ENCODE measurements at regions of chr18 and their contacts with region 1.

Region 1: DNA sequence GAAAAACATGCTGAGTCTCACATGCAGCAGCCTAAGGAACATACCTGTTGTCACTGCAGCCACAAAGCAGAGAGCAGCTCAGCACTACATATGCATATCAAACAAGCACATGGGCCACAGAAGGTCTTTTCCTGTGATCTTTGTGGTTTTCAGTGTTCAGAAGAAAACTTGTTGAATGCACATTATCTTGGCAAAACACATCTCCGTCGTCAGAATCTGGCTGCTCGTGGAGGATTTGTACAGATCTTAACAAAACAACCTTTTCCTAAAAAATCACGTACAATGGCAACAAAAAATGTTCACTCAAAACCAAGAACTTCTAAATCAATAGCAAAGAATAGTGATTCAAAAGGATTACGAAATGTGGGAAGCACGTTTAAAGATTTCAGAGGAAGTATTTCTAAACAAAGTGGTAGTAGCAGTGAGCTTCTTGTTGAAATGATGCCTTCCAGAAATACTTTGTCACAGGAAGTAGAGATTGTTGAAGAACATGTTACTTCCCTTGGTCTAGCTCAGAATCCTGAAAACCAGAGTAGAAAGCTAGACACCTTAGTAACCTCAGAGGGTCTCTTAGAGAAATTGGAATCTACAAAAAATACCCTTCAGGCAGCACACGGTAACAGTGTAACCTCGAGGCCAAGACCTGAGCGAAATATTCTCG is 34.1 kb downstream of the ZNF407 start:
- DNase-seq: peak in 7 of 9 donors; percentile 35 to 81 (median 67)
- ATAC-seq: peak; percentile 91
- H3K4me3 ChIP-seq: peak overlapping the region; percentile 6
- H3K4me3 Mint-ChIP-seq: peak overlapping the region; percentile 68 to 91 (median 86)
- H3K27ac ChIP-seq: peak overlapping the region; percentile 59
- H3K27ac Mint-ChIP-seq: peak overlapping the region; percentile 90 to 98 (median 95)
- H3K4me1 ChIP-seq: peaks cover 24 to 44% of the 10 kb centered on the region in 2 donors
- H3K4me1 Mint-ChIP-seq: peaks cover 46 to 79% (median 67%) of the 10 kb centered on the region in 7 donors
- H3K27me3 ChIP-seq: no peaks in the 10 kb centered on the region
- H3K27me3 Mint-ChIP-seq: no peaks in the 10 kb centered on the region

Region 2: DNA sequence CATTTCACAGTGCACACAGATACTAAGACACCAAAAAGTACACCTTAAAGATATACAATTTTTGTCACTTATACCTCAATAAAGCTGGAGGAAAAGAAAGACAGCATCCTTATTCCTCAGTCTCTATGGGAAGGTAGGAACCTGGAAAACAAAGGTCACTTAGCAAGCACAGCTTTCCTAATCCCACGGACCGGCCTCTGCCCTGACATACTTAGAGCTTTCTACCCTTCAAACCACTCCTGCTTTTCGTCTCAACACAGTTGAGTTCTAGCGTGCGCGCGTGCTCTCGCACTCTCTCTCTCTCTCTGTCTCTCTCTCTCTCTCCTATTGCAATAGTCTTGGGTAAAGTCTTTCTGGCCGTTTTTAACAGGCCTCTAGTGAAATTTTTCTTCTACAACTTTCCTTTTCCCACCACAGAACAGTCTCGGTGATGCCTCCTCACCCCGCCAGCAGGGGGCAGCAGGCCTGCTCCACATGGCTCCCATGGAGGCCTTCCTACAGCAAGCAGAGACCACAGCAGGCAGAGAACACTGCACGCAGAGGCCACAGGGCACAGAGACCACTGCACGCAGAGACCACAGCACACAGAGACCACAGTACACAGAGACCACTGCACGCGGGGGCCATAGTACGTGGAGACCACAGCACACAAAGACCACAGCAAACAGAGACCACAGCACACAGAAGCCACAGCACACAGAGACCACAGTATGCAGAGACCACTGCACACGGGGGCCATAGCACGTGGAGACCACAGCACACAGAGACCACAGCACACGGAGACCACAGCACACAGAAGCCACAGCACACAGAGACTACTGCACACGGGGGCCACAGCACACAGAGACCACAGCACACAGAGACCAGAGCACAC is 591.1 kb before region 1 on chr18:
- CTCF ChIA-PET with region 1: no interaction called
- POLR2A ChIA-PET with region 1: no interaction called
- intact Hi-C with region 1: no loop called
- DNase-seq: peak; percentile 32 to 81 (median 62)
- ATAC-seq: peak; percentile 68
- H3K4me3 ChIP-seq: no peak overlapping the region
- H3K4me3 Mint-ChIP-seq: no peak overlapping the region
- H3K27ac ChIP-seq: no peak overlapping the region
- H3K27ac Mint-ChIP-seq: no peak overlapping the region
- H3K4me1 ChIP-seq: no peaks in the 10 kb centered on the region
- H3K4me1 Mint-ChIP-seq: peaks cover 0 to 5% (median 0%) of the 10 kb centered on the region in 7 donors
- H3K27me3 ChIP-seq: no peaks in the 10 kb centered on the region
- H3K27me3 Mint-ChIP-seq: no peaks in the 10 kb centered on the region

Region 3: GRCh38 chr18:74183130-74183529 is 448.6 kb before region 1 on chr18:
- CTCF ChIA-PET with region 1: no interaction called
- POLR2A ChIA-PET with region 1: no interaction called
- intact Hi-C with region 1: no loop called
- DNase-seq: no peak
- ATAC-seq: no peak
- H3K4me3 ChIP-seq: no peak overlapping the region
- H3K4me3 Mint-ChIP-seq: no peak overlapping the region
- H3K27ac ChIP-seq: no peak overlapping the region
- H3K27ac Mint-ChIP-seq: no peak overlapping the region
- H3K4me1 ChIP-seq: no peaks in the 10 kb centered on the region
- H3K4me1 Mint-ChIP-seq: no peaks in the 10 kb centered on the region
- H3K27me3 ChIP-seq: no peaks in the 10 kb centered on the region
- H3K27me3 Mint-ChIP-seq: peaks cover 9 to 23% (median 13%) of the 10 kb centered on the region in 5 donors

Region 4: DNA sequence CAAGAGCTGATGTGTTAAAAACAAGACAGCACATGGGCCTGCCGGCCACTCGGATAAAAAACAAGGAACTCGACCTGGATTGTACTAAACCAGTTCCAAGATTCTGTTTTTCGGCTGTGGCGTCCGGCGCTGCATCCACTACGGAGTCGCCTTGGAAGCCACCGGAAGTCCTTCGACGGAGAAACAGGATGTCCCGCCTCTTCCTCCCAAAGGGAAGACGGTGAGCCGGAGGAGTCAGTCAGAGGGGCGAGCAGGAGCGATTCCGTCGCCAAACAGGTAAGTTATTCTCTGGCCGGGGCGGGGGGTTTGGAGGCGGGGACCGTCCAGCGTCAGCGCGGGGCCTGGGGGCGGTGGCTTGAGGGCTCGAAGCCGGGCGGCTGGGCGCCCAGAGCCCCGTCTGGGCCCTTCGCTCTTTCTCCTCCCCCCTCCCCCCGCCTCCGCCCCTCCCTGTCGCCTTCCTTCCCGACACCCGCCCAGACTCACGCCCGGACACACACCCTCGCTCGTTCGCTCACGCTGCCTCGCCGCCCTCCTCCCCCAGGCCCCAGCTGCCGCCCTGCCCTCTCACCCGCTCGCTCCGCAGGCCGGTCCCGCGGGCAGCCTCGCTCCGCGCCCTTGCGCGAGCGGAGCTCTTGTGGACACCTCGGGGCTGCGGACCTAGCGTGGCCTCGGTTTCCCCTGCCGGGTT is 33.9 kb before region 1 on chr18 and contains the start of gene ZNF407:
- CTCF ChIA-PET with region 1: no interaction called
- POLR2A ChIA-PET with region 1: interaction called, 70 read pairs
- intact Hi-C with region 1: loop called (anchors 1 kb)
- DNase-seq: peak; percentile 77 to 94 (median 90)
- ATAC-seq: peak; percentile 84
- H3K4me3 ChIP-seq: peak within 1 kb of the TSS; percentile 100
- H3K4me3 Mint-ChIP-seq: peak within 1 kb of the TSS; percentile 89 to 96 (median 95)
- H3K27ac ChIP-seq: peak within 1 kb of the TSS; percentile 88
- H3K27ac Mint-ChIP-seq: peak within 1 kb of the TSS; percentile 95 to 99 (median 98)
- H3K4me1 ChIP-seq: peaks cover 26 to 27% of the 10 kb centered on the region in 2 donors
- H3K4me1 Mint-ChIP-seq: peaks cover 33 to 74% (median 61%) of the 10 kb centered on the region in 7 donors
- H3K27me3 ChIP-seq: no peaks in the 10 kb centered on the region
- H3K27me3 Mint-ChIP-seq: no peaks in the 10 kb centered on the region
- total RNA-seq, gene ZNF407: 23.1 to 31.3 (median 29.7) TPM

Region 5: GRCh38 chr18:74645679-74646078 is 13.9 kb after region 1 on chr18:
- CTCF ChIA-PET with region 1: interaction called, 3 read pairs
- POLR2A ChIA-PET with region 1: interaction called, 7 read pairs
- intact Hi-C with region 1: loop called in 1 of 2 experiments (anchors 1 kb)
- DNase-seq: no peak
- ATAC-seq: no peak
- H3K4me3 ChIP-seq: no peak overlapping the region
- H3K4me3 Mint-ChIP-seq: no peak overlapping the region
- H3K27ac ChIP-seq: no peak overlapping the region
- H3K27ac Mint-ChIP-seq: no peak overlapping the region
- H3K4me1 ChIP-seq: no peaks in the 10 kb centered on the region
- H3K4me1 Mint-ChIP-seq: peaks cover 7 to 27% (median 18%) of the 10 kb centered on the region in 7 donors
- H3K27me3 ChIP-seq: no peaks in the 10 kb centered on the region
- H3K27me3 Mint-ChIP-seq: no peaks in the 10 kb centered on the region

Region 6: GRCh38 chr18:74951165-74951760 is 319.5 kb after region 1 on chr18:
- CTCF ChIA-PET with region 1: no interaction called
- POLR2A ChIA-PET with region 1: interaction called, 5 read pairs
- intact Hi-C with region 1: loop called in 1 of 2 experiments (anchors 5 kb)
- DNase-seq: peak in 7 of 9 donors; percentile 18 to 65 (median 38)
- ATAC-seq: peak; percentile 93
- H3K4me3 ChIP-seq: no peak overlapping the region
- H3K4me3 Mint-ChIP-seq: peak overlapping the region in 9 of 10 donors; percentile 44 to 83 (median 68)
- H3K27ac ChIP-seq: no peak overlapping the region
- H3K27ac Mint-ChIP-seq: peak overlapping the region; percentile 39 to 93 (median 86)
- H3K4me1 ChIP-seq: peaks cover 0 to 19% of the 10 kb centered on the region in 2 donors
- H3K4me1 Mint-ChIP-seq: peaks cover 13 to 38% (median 32%) of the 10 kb centered on the region in 7 donors
- H3K27me3 ChIP-seq: no peaks in the 10 kb centered on the region
- H3K27me3 Mint-ChIP-seq: no peaks in the 10 kb centered on the region

Region 7: DNA sequence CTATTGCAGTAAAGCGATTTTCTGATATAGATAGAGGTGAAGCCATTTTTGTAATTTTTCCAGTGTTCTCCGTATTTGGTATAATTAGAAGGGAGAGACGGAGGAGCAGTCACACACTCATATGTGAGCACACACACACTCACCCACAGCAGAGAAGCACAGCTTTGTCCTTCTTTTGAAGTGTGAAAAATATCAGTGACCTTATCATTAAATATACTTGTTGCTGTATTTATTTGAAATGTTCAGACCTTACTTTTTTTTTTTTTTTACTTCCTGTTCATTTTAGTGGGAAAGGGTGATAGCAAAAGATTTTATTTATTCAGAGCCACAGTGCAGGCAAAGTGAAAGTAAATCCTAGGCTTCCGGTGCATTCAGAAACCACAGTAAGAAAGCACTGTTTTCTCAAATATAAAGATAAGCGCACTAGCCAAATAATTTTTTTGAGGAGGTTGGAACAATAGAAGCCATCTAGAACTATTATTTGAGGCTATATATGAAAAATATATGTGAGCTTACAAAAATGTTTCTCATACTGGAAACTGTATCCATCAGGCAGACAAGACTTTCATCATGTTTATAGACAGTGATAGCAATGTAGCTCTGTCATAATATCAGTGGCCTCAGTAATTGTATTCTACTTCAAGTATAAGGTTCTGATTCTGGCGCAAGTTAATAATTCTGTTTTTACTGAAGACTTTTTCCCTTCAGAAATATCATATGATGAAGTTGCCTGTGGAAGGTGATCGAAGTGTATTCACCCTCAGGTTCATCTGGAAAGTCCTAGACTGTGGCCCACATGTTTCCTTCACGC is 616.1 kb after region 1 on chr18:
- CTCF ChIA-PET with region 1: no interaction called
- POLR2A ChIA-PET with region 1: interaction called, 10 read pairs
- intact Hi-C with region 1: loop called in 1 of 2 experiments (anchors 5 kb)
- DNase-seq: peak in 7 of 9 donors; percentile 43 to 66 (median 58)
- ATAC-seq: peak; percentile 62
- H3K4me3 ChIP-seq: peak overlapping the region; percentile 43
- H3K4me3 Mint-ChIP-seq: peak overlapping the region; percentile 86 to 93 (median 90)
- H3K27ac ChIP-seq: peak overlapping the region; percentile 82
- H3K27ac Mint-ChIP-seq: peak overlapping the region; percentile 91 to 99 (median 96)
- H3K4me1 ChIP-seq: peaks cover 31 to 43% of the 10 kb centered on the region in 2 donors
- H3K4me1 Mint-ChIP-seq: peaks cover 44 to 94% (median 87%) of the 10 kb centered on the region in 7 donors
- H3K27me3 ChIP-seq: no peaks in the 10 kb centered on the region
- H3K27me3 Mint-ChIP-seq: no peaks in the 10 kb centered on the region

Measured in naive thymus-derived CD4-positive, alpha-beta T cell (primary cell).